Common myeloid progenitor, CD34-positive (primary cell): ENCODE measurements at regions of chr14 and their contacts with region 1.

Region 1: DNA sequence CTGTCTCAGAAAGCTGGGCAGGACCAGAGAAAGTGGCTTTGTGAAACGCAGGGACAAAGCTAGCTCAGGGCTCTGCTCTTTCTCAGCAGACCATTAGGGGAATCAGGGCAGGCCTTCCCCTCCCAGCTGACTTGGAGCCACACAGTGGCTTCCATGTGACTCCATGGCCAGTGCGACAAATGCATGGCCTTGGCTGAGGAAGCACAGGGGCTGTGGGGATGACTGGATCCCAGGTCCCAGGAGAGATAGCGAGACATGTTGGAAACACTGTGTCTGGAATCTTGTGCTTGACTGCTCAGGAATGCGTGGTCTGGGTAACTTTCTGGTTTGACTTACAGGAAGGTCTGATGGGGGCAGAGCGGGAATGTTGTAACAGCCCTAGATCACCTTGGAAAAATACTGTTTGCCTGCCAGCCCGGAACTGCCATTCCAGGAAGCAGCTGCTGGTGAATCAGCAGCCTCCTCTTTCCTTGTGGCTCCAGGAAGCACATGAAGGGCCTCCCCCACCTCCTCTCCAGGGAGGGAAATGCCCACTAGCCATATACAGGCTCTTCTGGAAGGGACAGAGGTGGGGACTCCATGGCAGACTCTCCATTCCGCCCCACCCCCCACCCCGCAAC is 133.5 kb upstream of the HIF1A start:
- DNase-seq: peak in 2 of 3 donors; percentile 10 to 31
- H3K4me3 ChIP-seq: no peak overlapping the region
- H3K27ac ChIP-seq: no peak overlapping the region
- H3K4me1 ChIP-seq: peaks cover 0 to 26% (median 19%) of the 10 kb centered on the region in 4 experiments
- H3K27me3 ChIP-seq: no peaks in the 10 kb centered on the region

Region 2: GRCh38 chr14:61438860-61439684 is 122.7 kb before region 1 on chr14:
- CTCF ChIA-PET with region 1: no interaction called
- POLR2A ChIA-PET with region 1: no interaction called
- DNase-seq: peak; percentile 44 to 86 (median 77)
- H3K4me3 ChIP-seq: peak overlapping the region in 4 of 7 experiments; percentile 46 to 67 (median 56)
- H3K27ac ChIP-seq: no peak overlapping the region
- H3K4me1 ChIP-seq: peaks cover 5 to 41% (median 30%) of the 10 kb centered on the region in 4 experiments
- H3K27me3 ChIP-seq: no peaks in the 10 kb centered on the region

Region 3: GRCh38 chr14:61547186-61548086 is 14.3 kb before region 1 on chr14:
- CTCF ChIA-PET with region 1: interaction called, 16 read pairs
- POLR2A ChIA-PET with region 1: interaction called, 4 read pairs
- DNase-seq: no peak
- H3K4me3 ChIP-seq: no peak overlapping the region
- H3K27ac ChIP-seq: no peak overlapping the region
- H3K4me1 ChIP-seq: peaks cover 5 to 11% (median 8%) of the 10 kb centered on the region in 4 experiments
- H3K27me3 ChIP-seq: no peaks in the 10 kb centered on the region